Naive thymus-derived CD4-positive, alpha-beta T cell (primary cell): ENCODE measurements at regions of chr2 and their contacts with region 1.

Region 1: DNA sequence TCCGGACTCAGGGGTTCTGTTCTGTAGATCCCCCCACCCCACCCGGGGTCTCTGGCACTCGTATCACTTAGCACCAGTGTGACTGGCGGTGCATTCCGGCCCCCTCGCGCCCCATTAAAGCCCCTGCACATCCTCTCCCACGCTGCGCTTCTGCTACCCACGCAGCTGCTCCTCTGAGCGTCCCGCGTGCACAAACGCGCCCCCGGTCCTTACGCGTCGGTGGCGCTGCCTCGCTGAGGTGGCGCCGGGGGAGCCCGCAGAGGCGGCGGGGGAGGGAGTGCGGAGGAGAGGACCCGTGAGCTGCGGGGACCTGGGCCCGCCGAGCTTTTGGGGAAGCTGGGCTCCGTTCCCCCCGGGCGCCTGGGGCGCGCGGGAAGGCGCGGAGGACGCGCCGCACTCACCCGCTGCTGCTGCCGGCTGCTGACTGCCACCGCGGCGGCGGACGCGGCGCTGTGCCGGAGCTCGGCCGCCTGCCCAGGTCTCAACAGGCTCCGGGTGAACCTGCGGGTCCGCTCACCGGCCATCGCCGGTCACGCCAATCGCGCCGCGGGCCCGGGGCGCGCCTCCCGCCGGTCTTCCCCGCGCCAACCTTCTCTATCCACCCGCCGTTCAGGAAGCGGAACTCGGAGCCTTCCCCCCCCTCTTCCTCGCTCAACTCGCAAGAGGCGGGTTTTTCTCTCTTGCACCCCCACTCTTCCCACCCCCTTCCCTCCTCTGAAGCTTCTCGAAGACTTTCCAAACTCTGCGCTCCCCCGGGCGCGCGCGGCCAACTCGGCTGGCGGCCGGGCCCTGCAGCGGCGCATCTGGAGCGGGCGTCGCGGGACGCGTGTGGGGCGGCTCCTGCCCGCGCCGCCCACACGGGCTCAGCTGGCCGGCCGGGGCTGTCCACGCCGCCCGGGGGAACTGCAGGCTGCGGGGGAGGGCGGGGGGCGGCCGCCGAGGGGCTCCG is at the start of gene DOCK10:
- DNase-seq: peak; percentile 38 to 60 (median 57)
- ATAC-seq: peak; percentile 67
- H3K4me3 ChIP-seq: peak within 1 kb of the TSS; percentile 85
- H3K4me3 Mint-ChIP-seq: peak within 1 kb of the TSS; percentile 93 to 100 (median 98)
- H3K27ac ChIP-seq: peak within 1 kb of the TSS; percentile 96
- H3K27ac Mint-ChIP-seq: peak within 1 kb of the TSS; percentile 92 to 99 (median 96)
- H3K4me1 ChIP-seq: peaks cover 31 to 41% of the 10 kb centered on the region in 2 donors
- H3K4me1 Mint-ChIP-seq: peaks cover 40 to 61% (median 55%) of the 10 kb centered on the region in 7 donors
- H3K27me3 ChIP-seq: no peaks in the 10 kb centered on the region
- H3K27me3 Mint-ChIP-seq: peaks cover 0 to 29% (median 0%) of the 10 kb centered on the region in 5 donors
- total RNA-seq, gene DOCK10: 200 to 275 (median 231) TPM

Region 2: GRCh38 chr2:224242543-224242942 is 799.6 kb before region 1 on chr2:
- CTCF ChIA-PET with region 1: no interaction called
- POLR2A ChIA-PET with region 1: no interaction called
- intact Hi-C with region 1: no loop called
- DNase-seq: no peak
- ATAC-seq: no peak
- H3K4me3 ChIP-seq: no peak overlapping the region
- H3K4me3 Mint-ChIP-seq: no peak overlapping the region
- H3K27ac ChIP-seq: no peak overlapping the region
- H3K27ac Mint-ChIP-seq: no peak overlapping the region
- H3K4me1 ChIP-seq: no peaks in the 10 kb centered on the region
- H3K4me1 Mint-ChIP-seq: no peaks in the 10 kb centered on the region
- H3K27me3 ChIP-seq: peaks cover 0 to 4% of the 10 kb centered on the region in 2 donors
- H3K27me3 Mint-ChIP-seq: peaks cover 10 to 19% (median 18%) of the 10 kb centered on the region in 5 donors

Region 3: DNA sequence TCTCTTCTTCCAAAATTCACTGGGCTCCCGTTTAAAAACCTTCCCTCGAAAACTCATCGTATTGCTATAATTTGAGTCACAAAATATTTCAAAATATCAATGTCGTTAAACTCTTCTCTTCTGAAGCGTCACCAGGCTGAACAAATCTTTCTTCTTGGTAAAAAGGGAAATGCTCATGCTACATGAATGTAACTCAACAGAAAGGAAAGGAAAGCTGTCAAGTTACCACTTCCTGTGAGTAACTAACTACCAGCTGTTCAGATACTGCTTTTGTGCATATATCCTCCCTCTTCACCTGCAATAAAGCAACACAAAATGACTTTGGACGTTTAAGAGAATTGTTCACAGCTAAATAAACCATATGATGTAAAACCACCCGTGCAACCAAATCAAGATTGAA is 95.2 kb before region 1 on chr2:
- CTCF ChIA-PET with region 1: no interaction called
- POLR2A ChIA-PET with region 1: interaction called, 4 read pairs
- intact Hi-C with region 1: loop called (anchors 1 to 5 kb)
- DNase-seq: peak in 7 of 9 donors; percentile 60 to 82 (median 77)
- ATAC-seq: peak; percentile 90
- H3K4me3 ChIP-seq: peak overlapping the region; percentile 59
- H3K4me3 Mint-ChIP-seq: peak overlapping the region; percentile 79 to 99 (median 91)
- H3K27ac ChIP-seq: peak overlapping the region; percentile 84
- H3K27ac Mint-ChIP-seq: peak overlapping the region; percentile 68 to 98 (median 92)
- H3K4me1 ChIP-seq: peaks cover 52 to 69% of the 10 kb centered on the region in 2 donors
- H3K4me1 Mint-ChIP-seq: peaks cover 54 to 91% (median 79%) of the 10 kb centered on the region in 7 donors
- H3K27me3 ChIP-seq: no peaks in the 10 kb centered on the region
- H3K27me3 Mint-ChIP-seq: no peaks in the 10 kb centered on the region

Region 4: GRCh38 chr2:225025917-225026571 is 16.1 kb before region 1 on chr2:
- CTCF ChIA-PET with region 1: interaction called, 3 read pairs
- POLR2A ChIA-PET with region 1: interaction called, 10 read pairs
- intact Hi-C with region 1: loop called (anchors 1 kb)
- DNase-seq: peak in 6 of 9 donors; percentile 15 to 39 (median 28)
- ATAC-seq: peak; percentile 73
- H3K4me3 ChIP-seq: no peak overlapping the region
- H3K4me3 Mint-ChIP-seq: peak overlapping the region; percentile 0 to 74 (median 63)
- H3K27ac ChIP-seq: peak overlapping the region; percentile 17
- H3K27ac Mint-ChIP-seq: peak overlapping the region; percentile 11 to 78 (median 68)
- H3K4me1 ChIP-seq: peaks cover 34 to 52% of the 10 kb centered on the region in 2 donors
- H3K4me1 Mint-ChIP-seq: peaks cover 63 to 95% (median 83%) of the 10 kb centered on the region in 7 donors
- H3K27me3 ChIP-seq: no peaks in the 10 kb centered on the region
- H3K27me3 Mint-ChIP-seq: no peaks in the 10 kb centered on the region

Region 5: GRCh38 chr2:225052703-225053102 is 10.6 kb after region 1 on chr2:
- CTCF ChIA-PET with region 1: interaction called, 3 read pairs
- POLR2A ChIA-PET with region 1: interaction called, 33 read pairs
- intact Hi-C with region 1: loop called (anchors 1 kb)
- DNase-seq: peak in 6 of 9 donors; percentile 53 to 82 (median 73)
- ATAC-seq: peak; percentile 90
- H3K4me3 ChIP-seq: peak overlapping the region; percentile 17
- H3K4me3 Mint-ChIP-seq: peak overlapping the region; percentile 43 to 77 (median 64)
- H3K27ac ChIP-seq: peak overlapping the region; percentile 55
- H3K27ac Mint-ChIP-seq: peak overlapping the region; percentile 60 to 94 (median 80)
- H3K4me1 ChIP-seq: peaks cover 42 to 45% of the 10 kb centered on the region in 2 donors
- H3K4me1 Mint-ChIP-seq: peaks cover 29 to 71% (median 67%) of the 10 kb centered on the region in 7 donors
- H3K27me3 ChIP-seq: no peaks in the 10 kb centered on the region
- H3K27me3 Mint-ChIP-seq: peaks cover 0 to 20% (median 0%) of the 10 kb centered on the region in 5 donors

Region 6: DNA sequence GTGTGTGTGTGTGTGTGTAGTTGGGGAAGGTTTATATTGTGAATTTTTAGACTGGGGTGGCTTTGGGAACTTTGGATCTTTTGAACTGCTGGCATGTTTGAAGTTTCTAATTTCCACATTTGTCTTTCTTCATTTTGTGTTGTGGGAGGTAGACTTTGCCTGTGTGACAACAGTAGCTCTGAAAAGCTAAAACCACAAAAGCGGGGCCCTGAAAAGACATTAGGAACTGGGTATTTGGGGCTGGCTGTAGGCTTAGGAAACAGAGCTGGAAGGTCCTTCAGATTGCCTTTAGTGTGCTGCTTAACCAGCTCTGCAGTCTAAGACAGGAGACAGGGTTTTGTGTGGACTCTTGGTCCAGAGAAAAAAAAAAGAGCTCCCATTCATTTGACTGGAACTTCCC is 27.4 kb after region 1 on chr2:
- CTCF ChIA-PET with region 1: no interaction called
- POLR2A ChIA-PET with region 1: no interaction called
- intact Hi-C with region 1: no loop called
- DNase-seq: no peak
- ATAC-seq: no peak
- H3K4me3 ChIP-seq: no peak overlapping the region
- H3K4me3 Mint-ChIP-seq: no peak overlapping the region
- H3K27ac ChIP-seq: no peak overlapping the region
- H3K27ac Mint-ChIP-seq: no peak overlapping the region
- H3K4me1 ChIP-seq: peaks cover 5 to 6% of the 10 kb centered on the region in 2 donors
- H3K4me1 Mint-ChIP-seq: peaks cover 12 to 35% (median 25%) of the 10 kb centered on the region in 7 donors
- H3K27me3 ChIP-seq: no peaks in the 10 kb centered on the region
- H3K27me3 Mint-ChIP-seq: peaks cover 0 to 24% (median 0%) of the 10 kb centered on the region in 5 donors

Region 7: DNA sequence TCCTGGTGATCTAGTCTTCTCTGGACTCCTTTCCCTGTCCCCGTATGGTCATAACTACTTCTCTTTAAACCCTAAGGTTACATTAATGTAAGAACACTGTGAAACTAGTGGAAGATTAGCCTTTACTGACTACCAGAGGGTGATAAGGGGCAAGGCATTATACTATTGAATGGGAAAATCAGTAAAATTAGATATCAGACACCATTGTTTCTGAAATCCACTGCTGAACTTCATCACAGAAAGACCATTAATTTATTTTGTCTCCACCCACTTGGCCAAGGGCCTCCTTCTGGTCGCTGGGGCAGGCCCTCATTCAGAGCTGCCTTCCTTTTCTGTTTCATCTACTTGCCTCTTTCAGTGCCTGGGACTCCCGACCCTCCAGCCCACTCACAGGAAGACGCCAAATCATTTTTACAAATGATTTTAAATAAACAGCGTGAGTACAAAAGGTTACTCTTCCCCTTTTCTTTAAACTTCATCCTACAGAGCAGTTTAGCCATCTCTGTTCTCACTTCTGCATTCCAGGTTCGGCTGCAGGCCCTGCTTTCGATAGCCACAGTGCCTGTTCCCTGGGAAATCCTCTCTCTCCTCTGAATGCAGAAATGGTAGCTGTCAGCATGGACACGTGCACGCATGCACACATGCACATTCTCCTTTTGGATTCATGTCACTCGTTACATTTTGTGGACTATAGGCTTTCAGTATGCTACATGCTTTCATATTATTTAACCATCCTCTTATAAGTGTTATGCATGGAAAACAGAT is 70.4 kb after region 1 on chr2:
- CTCF ChIA-PET with region 1: no interaction called
- POLR2A ChIA-PET with region 1: no interaction called
- intact Hi-C with region 1: no loop called
- DNase-seq: no peak
- ATAC-seq: peak; percentile 65
- H3K4me3 ChIP-seq: no peak overlapping the region
- H3K4me3 Mint-ChIP-seq: no peak overlapping the region
- H3K27ac ChIP-seq: no peak overlapping the region
- H3K27ac Mint-ChIP-seq: no peak overlapping the region
- H3K4me1 ChIP-seq: no peaks in the 10 kb centered on the region
- H3K4me1 Mint-ChIP-seq: peaks cover 3 to 16% (median 11%) of the 10 kb centered on the region in 7 donors
- H3K27me3 ChIP-seq: no peaks in the 10 kb centered on the region
- H3K27me3 Mint-ChIP-seq: peaks cover 0 to 9% (median 0%) of the 10 kb centered on the region in 5 donors

Region 8: GRCh38 chr2:226489775-226490541 is 1447.8 kb after region 1 on chr2:
- CTCF ChIA-PET with region 1: no interaction called
- POLR2A ChIA-PET with region 1: no interaction called
- intact Hi-C with region 1: no loop called
- DNase-seq: no peak
- ATAC-seq: no peak
- H3K4me3 ChIP-seq: no peak overlapping the region
- H3K4me3 Mint-ChIP-seq: no peak overlapping the region
- H3K27ac ChIP-seq: no peak overlapping the region
- H3K27ac Mint-ChIP-seq: no peak overlapping the region
- H3K4me1 ChIP-seq: no peaks in the 10 kb centered on the region
- H3K4me1 Mint-ChIP-seq: peaks cover 0 to 2% (median 0%) of the 10 kb centered on the region in 7 donors
- H3K27me3 ChIP-seq: no peaks in the 10 kb centered on the region
- H3K27me3 Mint-ChIP-seq: peaks cover 0 to 6% (median 0%) of the 10 kb centered on the region in 5 donors